Activated CD4-positive, alpha-beta memory T cell treated with anti-CD3 and anti-CD28 coated beads, Interleukin-2, amount 10 ng/mL, durations not matched to agents 7 days and 5 days (primary cell): ENCODE measurements at regions of chr11 and their contacts with region 1.

Region 1: DNA sequence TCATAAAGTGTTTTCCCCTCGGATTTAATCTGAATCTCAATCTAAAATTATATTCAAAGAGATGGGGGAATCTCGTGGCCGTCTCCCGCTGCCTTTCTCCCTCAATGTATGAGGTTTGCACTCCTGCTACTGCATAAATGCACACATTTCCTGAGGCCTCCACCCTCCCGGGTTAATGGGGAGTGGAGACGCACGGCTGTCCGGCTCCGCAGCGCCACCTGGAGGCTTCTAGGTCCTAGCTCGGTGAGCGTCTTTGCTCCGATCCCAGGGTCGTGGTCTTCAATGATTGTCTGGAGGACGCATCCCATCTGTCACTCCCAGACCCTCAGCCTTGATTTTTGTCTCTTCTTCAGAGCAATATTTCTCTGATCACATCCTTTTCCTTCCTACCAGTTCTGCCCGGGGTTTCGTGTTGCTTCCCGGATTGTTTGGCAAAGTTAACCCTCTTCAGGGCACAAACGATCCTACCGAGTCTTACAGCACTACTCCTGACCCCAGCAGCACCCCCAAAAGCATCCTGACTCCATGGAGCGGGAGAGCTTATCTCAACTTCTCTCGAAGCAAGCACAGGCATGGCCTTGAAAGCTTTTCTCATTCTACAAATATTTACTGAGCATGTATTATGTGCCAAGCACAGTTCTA is at the start of gene LMO1:
- DNase-seq: peak; percentile 75
- H3K4me3 Mint-ChIP-seq: no peak within 1 kb of the TSS
- H3K27ac Mint-ChIP-seq: no peak within 1 kb of the TSS
- H3K4me1 Mint-ChIP-seq: peaks cover 12% of the 10 kb centered on the region
- H3K27me3 Mint-ChIP-seq: peaks cover 70% of the 10 kb centered on the region
- total RNA-seq, gene LMO1: not detected

Region 2: GRCh38 chr11:8229299-8230177 is 34.4 kb before region 1 on chr11:
- CTCF ChIA-PET with region 1: interaction called, 12 read pairs
- POLR2A ChIA-PET with region 1: no interaction called
- DNase-seq: no peak
- H3K4me3 Mint-ChIP-seq: no peak overlapping the region
- H3K27ac Mint-ChIP-seq: no peak overlapping the region
- H3K4me1 Mint-ChIP-seq: no peaks in the 10 kb centered on the region
- H3K27me3 Mint-ChIP-seq: no peaks in the 10 kb centered on the region

Region 3: GRCh38 chr11:8247312-8247711 is 16.6 kb before region 1 on chr11:
- CTCF ChIA-PET with region 1: interaction called, 17 read pairs
- POLR2A ChIA-PET with region 1: no interaction called
- DNase-seq: peak; percentile 28
- H3K4me3 Mint-ChIP-seq: no peak overlapping the region
- H3K27ac Mint-ChIP-seq: no peak overlapping the region
- H3K4me1 Mint-ChIP-seq: no peaks in the 10 kb centered on the region
- H3K27me3 Mint-ChIP-seq: peaks cover 7% of the 10 kb centered on the region

Region 4: DNA sequence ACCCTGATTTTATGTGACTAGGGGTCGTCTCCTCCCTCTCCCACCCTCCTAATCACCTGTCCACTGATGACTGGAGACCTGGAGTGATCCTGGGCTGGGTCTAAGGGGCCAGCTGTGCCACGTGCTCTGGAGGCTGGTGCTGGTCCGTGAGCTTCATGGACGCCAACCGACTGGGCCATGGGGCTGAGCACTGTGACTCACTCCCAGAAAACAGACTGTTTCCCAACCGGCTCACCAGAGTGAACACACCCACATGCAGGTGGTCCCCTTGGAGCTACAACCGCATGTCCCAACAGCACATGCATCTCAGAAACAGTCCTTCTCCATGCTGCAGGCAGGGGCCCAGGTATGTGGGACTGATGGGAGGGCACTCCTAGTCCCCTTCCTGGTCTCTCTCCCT is 13.8 kb after region 1 on chr11:
- CTCF ChIA-PET with region 1: interaction called, 20 read pairs
- POLR2A ChIA-PET with region 1: no interaction called
- DNase-seq: no peak
- H3K4me3 Mint-ChIP-seq: no peak overlapping the region
- H3K27ac Mint-ChIP-seq: no peak overlapping the region
- H3K4me1 Mint-ChIP-seq: no peaks in the 10 kb centered on the region
- H3K27me3 Mint-ChIP-seq: peaks cover 16% of the 10 kb centered on the region

Region 5: GRCh38 chr11:8566613-8567210 is 302.8 kb after region 1 on chr11:
- CTCF ChIA-PET with region 1: interaction called, 13 read pairs
- POLR2A ChIA-PET with region 1: no interaction called
- DNase-seq: no peak
- H3K4me3 Mint-ChIP-seq: no peak overlapping the region
- H3K27ac Mint-ChIP-seq: no peak overlapping the region
- H3K4me1 Mint-ChIP-seq: no peaks in the 10 kb centered on the region
- H3K27me3 Mint-ChIP-seq: peaks cover 35% of the 10 kb centered on the region